H1 (cell line): ENCODE measurements at regions of chr11 and their contacts with region 1.

Region 1: GRCh38 chr11:125923012-125923579 is 18.8 kb downstream of the DDX25 start:
- DNase-seq: peak in 1 of 2 experiments; percentile 34
- H3K4me3 ChIP-seq: no peak overlapping the region
- H3K27ac ChIP-seq: no peak overlapping the region
- H3K4me1 ChIP-seq: no peaks in the 10 kb centered on the region; a peak in 1 of 7 replicates
- H3K27me3 ChIP-seq: no peaks in the 10 kb centered on the region; a peak in 1 of 7 replicates
- CTCF ChIP-seq: peak; percentile 64 to 88 (median 86)
- EP300 ChIP-seq: no peak
- POLR2A ChIP-seq: no peak
- RAD21 ChIP-seq: peak; percentile 96

Region 2: DNA sequence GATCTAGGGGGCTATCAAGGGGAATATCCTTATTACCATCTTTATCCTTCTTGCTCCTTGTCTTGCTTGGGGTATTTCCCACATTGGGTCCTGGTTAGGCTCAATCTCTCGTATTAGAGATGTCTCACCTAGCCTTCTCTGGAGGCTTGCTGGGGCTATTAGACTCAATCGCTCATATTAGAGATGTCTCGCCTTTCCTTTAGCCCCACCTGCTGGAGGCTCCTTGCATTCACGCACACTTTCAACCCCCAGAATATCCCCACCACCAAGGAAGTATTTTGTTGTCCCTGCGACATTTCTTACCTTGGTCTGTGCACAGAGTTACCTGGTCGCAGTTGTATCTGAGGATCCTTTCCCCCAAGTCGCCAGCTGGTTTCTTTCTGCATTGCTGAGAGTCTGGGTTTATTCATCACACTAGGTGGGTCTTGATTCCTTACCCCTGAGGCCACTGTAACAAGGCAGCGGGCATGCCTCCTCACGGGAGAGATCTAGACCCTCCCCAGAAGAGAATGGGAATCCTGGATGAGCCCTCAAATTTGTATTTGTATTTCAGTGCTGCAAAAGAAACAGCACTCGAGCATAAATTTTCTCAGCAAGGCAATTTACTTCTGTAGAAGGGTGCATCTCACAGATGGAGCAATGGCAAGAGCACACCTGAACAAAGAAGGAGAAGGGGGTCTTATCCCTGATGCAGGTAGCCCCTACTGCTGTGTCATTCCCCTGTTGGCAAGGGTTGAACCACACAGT is 51.5 kb before region 1 on chr11:
- CTCF ChIA-PET with region 1: no interaction called
- POLR2A ChIA-PET with region 1: no interaction called
- DNase-seq: peak in 1 of 2 experiments; percentile 87
- H3K4me3 ChIP-seq: no peak overlapping the region
- H3K27ac ChIP-seq: no peak overlapping the region
- H3K4me1 ChIP-seq: no peaks in the 10 kb centered on the region; a peak in 1 of 7 replicates
- H3K27me3 ChIP-seq: no peaks in the 10 kb centered on the region
- CTCF ChIP-seq: peak; percentile 68 to 88 (median 79)
- EP300 ChIP-seq: no peak
- POLR2A ChIP-seq: no peak
- RAD21 ChIP-seq: peak; percentile 91 to 92

Region 3: DNA sequence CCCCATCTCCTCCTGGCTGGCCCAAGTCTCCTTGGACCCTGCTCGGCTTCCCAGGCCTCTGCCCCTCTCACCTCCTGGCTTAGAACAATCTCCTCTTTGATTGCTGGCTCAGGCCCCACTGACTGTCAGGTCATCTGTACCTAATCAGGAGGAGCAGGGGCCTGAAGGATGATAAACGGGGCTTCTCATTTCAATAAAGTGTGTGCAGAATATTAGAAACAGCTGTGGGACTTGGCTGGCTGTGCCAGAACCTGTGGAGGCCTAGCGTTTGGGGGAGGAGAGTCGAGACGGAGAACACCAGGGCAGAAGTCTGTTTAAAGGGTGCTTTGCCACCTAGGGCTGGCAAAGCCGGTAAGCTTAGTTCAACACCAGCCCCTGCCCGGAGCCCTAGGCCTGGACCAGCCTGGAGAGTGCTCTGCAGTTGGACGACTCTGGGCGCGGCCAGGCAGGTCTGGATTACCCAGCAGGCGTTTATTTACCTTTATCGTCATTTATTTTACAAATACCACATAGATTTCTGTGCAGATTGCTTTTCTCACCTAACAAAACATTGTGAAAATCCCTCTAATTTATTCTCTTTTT is 12.6 kb after region 1 on chr11:
- CTCF ChIA-PET with region 1: interaction called, 76 read pairs
- POLR2A ChIA-PET with region 1: interaction called, 3 read pairs
- DNase-seq: peak in 1 of 2 experiments; percentile 33
- H3K4me3 ChIP-seq: no peak overlapping the region
- H3K27ac ChIP-seq: no peak overlapping the region
- H3K4me1 ChIP-seq: peaks cover 6 to 14% (median 11%) of the 10 kb centered on the region in 4 experiments
- H3K27me3 ChIP-seq: peaks cover 0 to 6% (median 2%) of the 10 kb centered on the region in 4 experiments; a peak in 2 of 7 replicates
- CTCF ChIP-seq: no peak
- EP300 ChIP-seq: no peak
- POLR2A ChIP-seq: no peak
- RAD21 ChIP-seq: no peak

Region 4: DNA sequence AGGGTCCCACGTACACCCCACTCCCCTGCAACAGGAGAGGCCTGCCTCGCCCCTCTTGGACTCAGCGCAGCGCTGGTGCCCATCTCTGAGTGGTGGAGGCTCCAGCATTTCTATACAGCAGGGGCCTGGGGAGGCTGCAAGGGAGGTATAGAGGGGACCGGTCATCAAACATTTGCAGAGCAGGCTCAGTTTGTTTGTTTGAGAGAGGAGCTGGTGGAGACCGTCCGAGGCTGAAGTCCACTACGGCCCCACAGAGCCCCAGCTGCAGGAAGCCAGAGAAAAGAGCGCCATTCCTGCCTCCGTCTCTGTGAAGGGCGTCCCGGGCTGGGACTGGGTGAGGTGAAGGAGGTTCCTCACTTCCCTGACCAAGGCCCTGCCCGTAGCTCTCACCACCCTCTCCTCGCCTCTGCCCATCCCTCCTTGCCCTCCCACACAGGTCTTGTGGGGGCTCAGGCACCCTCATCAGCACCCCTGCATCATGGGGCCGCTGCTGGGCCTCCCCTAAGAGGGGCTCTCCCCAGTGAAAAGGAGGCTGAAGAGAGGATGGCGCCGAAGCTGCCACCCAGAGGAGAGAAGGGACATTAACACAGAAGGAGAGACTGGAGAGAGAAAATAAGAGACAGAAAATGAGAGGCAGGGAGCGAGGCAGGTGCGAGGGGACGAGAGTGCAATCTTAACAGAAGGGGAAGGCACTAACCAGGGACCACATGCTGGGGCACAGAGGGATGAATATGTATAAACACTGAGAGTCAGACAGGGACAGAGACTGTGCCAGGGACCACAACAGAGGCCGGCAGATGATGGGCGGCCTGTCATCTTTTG is 263.8 kb after region 1 on chr11:
- CTCF ChIA-PET with region 1: interaction called, 118 read pairs
- POLR2A ChIA-PET with region 1: interaction called, 3 read pairs
- DNase-seq: no peak
- H3K4me3 ChIP-seq: no peak overlapping the region
- H3K27ac ChIP-seq: no peak overlapping the region
- H3K4me1 ChIP-seq: peaks cover 0 to 2% (median 0%) of the 10 kb centered on the region in 4 experiments; a peak in 1 of 7 replicates
- H3K27me3 ChIP-seq: no peaks in the 10 kb centered on the region
- CTCF ChIP-seq: peak; percentile 25 to 45 (median 32)
- EP300 ChIP-seq: no peak
- POLR2A ChIP-seq: no peak
- RAD21 ChIP-seq: peak; percentile 56 to 63

Region 5: GRCh38 chr11:126194121-126194543 is 271.0 kb after region 1 on chr11:
- CTCF ChIA-PET with region 1: interaction called, 118 read pairs
- POLR2A ChIA-PET with region 1: interaction called, 3 read pairs
- DNase-seq: peak in 1 of 2 experiments; percentile 62
- H3K4me3 ChIP-seq: no peak overlapping the region
- H3K27ac ChIP-seq: no peak overlapping the region
- H3K4me1 ChIP-seq: no peaks in the 10 kb centered on the region; a peak in 1 of 7 replicates
- H3K27me3 ChIP-seq: no peaks in the 10 kb centered on the region
- CTCF ChIP-seq: peak in 2 of 3 experiments; percentile 62 to 69; a peak in 3 of 4 replicates
- EP300 ChIP-seq: no peak
- POLR2A ChIP-seq: no peak
- RAD21 ChIP-seq: peak; percentile 93 to 95